GM10248 (cell line): ENCODE measurements at regions of chr1 and their contacts with region 1.

Region 1: GRCh38 chr1:116397728-116398127 is 24.7 kb downstream of the ATP1A1 start:
- DNase-seq: no peak
- CTCF ChIP-seq: no peak

Region 2: GRCh38 chr1:116380499-116381242 is 17.1 kb before region 1 on chr1:
- CTCF ChIA-PET with region 1: interaction called, 11 read pairs
- POLR2A ChIA-PET with region 1: no interaction called
- DNase-seq: peak; percentile 22
- CTCF ChIP-seq: no peak

Region 3: GRCh38 chr1:116740746-116741145 is 343.0 kb after region 1 on chr1:
- CTCF ChIA-PET with region 1: no interaction called
- POLR2A ChIA-PET with region 1: no interaction called
- DNase-seq: no peak
- CTCF ChIP-seq: no peak